Activated naive CD4-positive, alpha-beta T cell treated with anti-CD3 and anti-CD28 coated beads, Interleukin-2, amount 10 ng/mL, durations not matched to agents 7 days and 5 days (primary cell): ENCODE measurements at regions of chr1 and their contacts with region 1.

Region 1: DNA sequence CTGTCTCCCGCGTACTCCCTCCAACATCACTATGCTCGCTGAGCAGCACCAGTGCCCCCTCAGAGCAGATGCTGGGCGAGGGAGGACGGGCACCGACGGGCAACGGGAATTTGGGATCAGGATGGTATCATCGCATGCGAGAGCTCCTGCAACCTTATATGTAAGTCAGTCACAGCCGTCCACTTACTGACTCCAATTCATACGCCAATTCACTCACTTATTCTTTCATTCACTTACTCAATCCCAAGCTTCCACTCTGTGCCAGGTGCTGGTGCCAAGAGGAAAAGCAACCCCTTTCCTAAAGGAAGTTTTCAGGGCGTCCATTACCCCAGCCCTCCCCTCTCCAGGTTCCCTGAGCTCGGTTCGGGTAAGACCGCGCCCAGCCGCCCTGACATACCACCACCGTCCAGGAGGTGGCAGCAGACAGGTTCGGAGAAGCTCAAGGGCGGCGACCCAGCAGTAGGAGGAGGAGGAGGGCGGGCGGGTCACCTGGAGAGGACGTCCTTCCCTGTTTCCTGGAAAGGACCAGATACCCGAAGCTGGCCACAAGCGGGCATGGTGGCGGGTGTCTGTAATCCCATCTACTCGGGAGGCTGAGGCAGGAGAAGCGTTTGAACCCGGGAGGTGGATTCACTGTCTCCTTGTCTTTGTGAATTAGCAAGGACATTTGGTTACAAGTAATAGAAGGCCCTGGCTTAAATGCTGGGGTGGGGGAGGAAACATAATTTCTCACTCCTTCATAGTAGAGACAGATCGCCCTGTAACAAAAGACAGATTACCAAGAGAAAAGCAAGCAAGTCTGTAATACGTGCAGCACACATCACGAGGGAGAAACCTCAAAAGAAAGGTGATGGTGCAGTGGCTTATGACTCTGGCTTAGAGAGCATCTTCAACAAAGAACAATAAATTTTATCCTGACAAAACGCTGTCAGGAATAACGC is 7.6 kb upstream of the IL22RA1 start:
- DNase-seq: peak; percentile 93
- H3K4me3 Mint-ChIP-seq: peak overlapping the region; percentile 10
- H3K27ac Mint-ChIP-seq: no peak overlapping the region
- H3K4me1 Mint-ChIP-seq: peaks cover 19% of the 10 kb centered on the region
- H3K27me3 Mint-ChIP-seq: peaks cover 65% of the 10 kb centered on the region

Region 2: GRCh38 chr1:24190983-24191461 is 40.5 kb after region 1 on chr1:
- CTCF ChIA-PET with region 1: interaction called, 12 read pairs
- DNase-seq: no peak
- H3K4me3 Mint-ChIP-seq: no peak overlapping the region
- H3K27ac Mint-ChIP-seq: peak overlapping the region; percentile 88
- H3K4me1 Mint-ChIP-seq: peaks cover 63% of the 10 kb centered on the region
- H3K27me3 Mint-ChIP-seq: peaks cover 17% of the 10 kb centered on the region

Region 3: GRCh38 chr1:24329797-24330543 is 179.5 kb after region 1 on chr1:
- CTCF ChIA-PET with region 1: no interaction called
- DNase-seq: no peak
- H3K4me3 Mint-ChIP-seq: no peak overlapping the region
- H3K27ac Mint-ChIP-seq: no peak overlapping the region
- H3K4me1 Mint-ChIP-seq: no peaks in the 10 kb centered on the region
- H3K27me3 Mint-ChIP-seq: peaks cover 87% of the 10 kb centered on the region